B cell (primary cell): ENCODE measurements at regions of chr2 and their contacts with region 1.

Region 1: DNA sequence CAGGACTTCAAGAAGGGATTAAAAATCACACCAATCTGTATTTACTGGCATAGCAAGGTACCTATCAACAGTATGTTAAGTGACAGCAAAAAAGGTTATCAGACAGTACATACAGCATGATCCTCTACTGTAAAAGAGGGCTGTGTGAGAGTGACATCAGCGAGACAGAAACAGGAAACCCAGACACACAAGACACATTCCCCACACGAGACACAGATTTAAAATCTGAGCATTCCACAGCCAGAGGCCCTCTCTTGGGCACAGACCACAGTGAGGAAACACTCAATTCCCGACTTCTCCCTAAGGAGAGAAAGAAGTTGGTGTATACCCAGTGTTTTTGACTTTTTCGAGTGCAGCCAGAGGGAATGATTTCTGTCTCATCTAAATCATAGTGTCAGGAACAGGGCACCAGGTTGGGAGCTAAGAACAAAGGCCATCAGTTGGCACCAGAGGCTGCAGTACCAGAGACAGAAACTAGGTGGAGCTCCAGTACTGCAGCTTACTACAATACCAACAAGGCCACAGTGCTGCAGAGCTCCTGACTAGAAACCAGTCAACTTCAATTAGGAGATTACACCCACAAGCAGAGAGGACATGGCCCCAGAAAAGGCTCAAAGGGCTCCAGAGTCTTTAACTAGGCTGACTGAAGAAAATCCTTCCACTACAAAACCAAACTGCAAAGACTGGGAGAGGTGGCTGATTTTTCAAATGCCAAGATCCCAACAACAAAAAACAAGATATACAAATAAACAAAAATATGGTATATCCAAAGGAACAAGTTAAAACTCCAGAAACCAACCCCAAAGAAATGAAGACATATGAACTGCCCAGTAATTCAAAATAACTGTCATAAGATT is 41.0 kb downstream of the UNC50 start:
- DNase-seq: peak; percentile 85
- ATAC-seq: peak; percentile 99
- H3K4me3 ChIP-seq: no peak overlapping the region
- H3K4me3 Mint-ChIP-seq: no peak overlapping the region
- H3K27ac ChIP-seq: no peak overlapping the region
- H3K27ac Mint-ChIP-seq: no peak overlapping the region
- H3K4me1 ChIP-seq: no peaks in the 10 kb centered on the region
- H3K4me1 Mint-ChIP-seq: peaks cover 24% of the 10 kb centered on the region
- H3K27me3 ChIP-seq: no peaks in the 10 kb centered on the region
- H3K27me3 Mint-ChIP-seq: no peaks in the 10 kb centered on the region
- CTCF ChIP-seq: peak; percentile 98

Region 2: DNA sequence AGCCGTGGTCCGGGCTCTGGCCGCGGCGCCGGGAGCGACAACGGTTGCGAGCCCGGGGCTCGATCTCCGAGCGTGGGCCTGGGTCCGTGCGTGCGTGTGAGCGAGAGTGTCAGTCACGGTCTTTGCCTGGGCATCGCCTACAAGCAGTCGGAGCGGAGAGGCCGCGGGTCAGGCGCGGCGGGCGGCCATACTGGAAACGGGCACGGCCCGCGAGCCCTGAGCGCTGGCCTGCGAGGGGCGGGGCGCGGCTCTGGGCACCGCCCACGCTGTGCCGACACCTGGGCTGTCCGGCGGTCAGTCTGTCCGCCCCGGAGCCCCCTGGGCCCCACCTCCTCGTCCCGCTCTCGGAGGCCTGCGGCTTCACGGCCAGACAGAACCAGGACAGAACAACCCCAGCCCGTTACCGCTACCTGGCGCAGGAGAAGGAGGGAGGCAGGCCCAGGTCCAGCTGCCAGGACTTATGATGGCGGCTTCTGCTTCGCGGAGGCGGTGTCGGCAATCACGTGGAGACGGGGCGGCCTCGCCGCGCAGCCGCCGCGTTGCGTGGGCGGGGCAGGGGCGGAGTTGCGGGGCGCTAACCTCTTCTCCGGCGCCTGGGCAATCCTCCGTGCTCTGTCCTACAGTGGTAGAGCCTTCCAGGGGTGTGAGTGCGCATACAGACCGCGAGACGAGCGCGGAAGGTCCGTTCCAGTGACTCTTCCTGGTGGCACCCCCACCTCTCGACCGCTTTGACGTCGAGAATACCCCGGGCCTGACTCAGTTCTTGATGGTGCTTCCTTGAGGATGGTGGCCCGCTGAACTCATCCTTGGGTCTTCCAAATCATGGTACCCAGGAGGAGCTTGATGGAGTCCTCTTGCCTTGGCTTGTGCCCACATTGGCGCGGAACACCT is 653.4 kb before region 1 on chr2 and contains the start of gene TMEM131:
- CTCF ChIA-PET with region 1: no interaction called
- POLR2A ChIA-PET with region 1: no interaction called
- intact Hi-C with region 1: no loop called
- DNase-seq: peak; percentile 98
- ATAC-seq: peak; percentile 81
- H3K4me3 ChIP-seq: peak within 1 kb of the TSS; percentile 63 to 89 (median 82)
- H3K4me3 Mint-ChIP-seq: peak within 1 kb of the TSS; percentile 93
- H3K27ac ChIP-seq: peak within 1 kb of the TSS; percentile 82 to 93
- H3K27ac Mint-ChIP-seq: peak within 1 kb of the TSS; percentile 96
- H3K4me1 ChIP-seq: peaks cover 31 to 32% of the 10 kb centered on the region in 2 donors
- H3K4me1 Mint-ChIP-seq: peaks cover 41% of the 10 kb centered on the region
- H3K27me3 ChIP-seq: no peaks in the 10 kb centered on the region
- H3K27me3 Mint-ChIP-seq: no peaks in the 10 kb centered on the region
- CTCF ChIP-seq: no peak
- total RNA-seq, gene TMEM131: 101 and 102 TPM in 2 replicates

Region 3: DNA sequence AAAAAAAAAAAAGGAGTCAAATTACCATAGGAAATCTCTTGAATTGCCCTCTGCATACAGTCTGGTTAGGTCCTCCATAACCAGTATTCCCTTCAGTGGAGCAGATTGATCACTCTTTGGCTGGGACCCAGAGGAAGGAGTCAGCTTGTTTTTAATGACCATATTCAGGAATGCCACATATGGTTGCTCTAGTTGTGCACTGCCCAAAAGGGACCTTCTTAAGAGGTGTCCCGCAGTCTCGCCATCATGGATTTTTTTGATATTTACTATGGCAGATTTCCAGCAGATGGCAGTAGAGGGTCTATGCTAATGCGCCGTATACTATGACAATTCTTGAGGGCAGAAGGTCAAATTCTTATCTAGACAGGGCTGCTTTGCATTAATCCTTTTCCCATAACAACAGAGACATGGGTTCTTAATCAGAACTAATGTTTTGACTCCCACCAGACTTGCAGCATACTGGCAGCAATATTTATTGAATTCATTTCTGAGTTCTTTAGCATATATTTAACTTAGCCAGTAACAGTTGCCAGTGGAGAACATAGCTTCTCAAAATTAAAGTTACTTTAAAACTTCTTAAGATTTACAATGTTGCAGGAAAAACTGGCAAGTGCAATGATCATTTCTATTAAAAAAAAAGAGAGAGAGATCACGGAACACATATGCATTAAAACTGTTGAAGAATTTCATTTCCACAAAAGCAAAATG is 236.5 kb before region 1 on chr2:
- CTCF ChIA-PET with region 1: interaction called, 6 read pairs
- POLR2A ChIA-PET with region 1: no interaction called
- intact Hi-C with region 1: loop called (anchors 2 kb)
- DNase-seq: peak; percentile 83
- ATAC-seq: peak; percentile 81
- H3K4me3 ChIP-seq: no peak overlapping the region
- H3K4me3 Mint-ChIP-seq: no peak overlapping the region
- H3K27ac ChIP-seq: no peak overlapping the region
- H3K27ac Mint-ChIP-seq: no peak overlapping the region
- H3K4me1 ChIP-seq: peaks cover 0 to 2% of the 10 kb centered on the region in 2 donors
- H3K4me1 Mint-ChIP-seq: peaks cover 2% of the 10 kb centered on the region
- H3K27me3 ChIP-seq: no peaks in the 10 kb centered on the region
- H3K27me3 Mint-ChIP-seq: peaks cover 4% of the 10 kb centered on the region
- CTCF ChIP-seq: peak; percentile 93

Region 4: DNA sequence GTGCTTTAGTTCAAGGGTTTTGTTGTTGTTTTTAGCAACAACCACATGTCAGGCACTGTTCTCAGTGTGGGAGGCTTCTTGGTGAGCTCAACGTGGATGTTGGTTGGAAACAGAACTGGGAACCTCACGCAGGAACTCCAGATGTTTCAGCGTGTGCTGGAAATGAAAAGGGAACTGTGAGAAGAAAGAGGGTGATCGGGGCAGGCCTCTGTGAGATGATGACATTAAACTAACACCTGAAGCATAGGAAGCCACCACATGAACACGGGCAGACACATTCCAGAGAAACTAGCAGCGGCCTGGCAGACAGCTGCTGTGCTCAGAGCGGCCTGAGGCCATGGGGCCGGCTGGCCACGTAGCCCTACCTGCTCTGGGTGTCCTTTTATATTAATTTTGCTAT is 107.5 kb before region 1 on chr2:
- CTCF ChIA-PET with region 1: no interaction called
- POLR2A ChIA-PET with region 1: no interaction called
- intact Hi-C with region 1: no loop called
- DNase-seq: no peak
- ATAC-seq: no peak
- H3K4me3 ChIP-seq: no peak overlapping the region
- H3K4me3 Mint-ChIP-seq: no peak overlapping the region
- H3K27ac ChIP-seq: no peak overlapping the region
- H3K27ac Mint-ChIP-seq: no peak overlapping the region
- H3K4me1 ChIP-seq: peaks cover 0 to under 1% of the 10 kb centered on the region in 2 donors
- H3K4me1 Mint-ChIP-seq: peaks cover 2% of the 10 kb centered on the region
- H3K27me3 ChIP-seq: no peaks in the 10 kb centered on the region
- H3K27me3 Mint-ChIP-seq: no peaks in the 10 kb centered on the region
- CTCF ChIP-seq: no peak

Region 5: DNA sequence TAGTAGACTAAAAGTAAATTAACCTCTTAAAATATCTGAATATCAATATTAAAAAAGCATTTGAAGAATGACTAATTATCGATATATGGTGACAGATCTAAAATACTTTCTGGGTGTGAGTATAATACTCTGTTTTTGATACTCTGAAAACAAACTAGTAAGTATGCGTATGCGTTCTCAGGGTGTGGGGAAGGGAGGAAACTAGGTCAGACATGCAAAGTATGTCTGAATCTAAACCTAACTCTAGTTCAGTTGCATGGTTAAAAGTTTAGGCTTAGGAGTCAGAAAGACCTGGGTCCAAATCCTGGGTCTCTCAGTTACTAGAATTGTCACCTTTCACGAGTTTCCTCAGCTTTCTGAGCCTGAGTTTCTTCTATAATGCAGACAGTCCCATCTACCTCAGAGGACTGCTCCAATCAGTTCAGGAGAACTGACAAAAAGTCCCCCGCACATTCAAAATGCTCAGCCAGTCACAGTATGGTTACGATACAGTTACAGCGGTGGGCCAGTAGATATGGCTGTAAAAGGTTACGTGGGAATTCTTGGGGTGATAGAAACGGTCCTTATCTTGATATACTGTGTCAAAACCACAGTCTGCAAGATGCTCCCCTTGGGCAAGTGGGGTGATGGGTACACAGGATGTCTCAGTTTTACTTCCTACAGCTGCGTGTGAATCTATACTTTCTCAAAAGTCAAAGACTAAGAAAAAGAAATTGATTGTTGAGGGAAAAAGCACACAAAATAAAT is 11.8 kb before region 1 on chr2:
- CTCF ChIA-PET with region 1: interaction called, 26 read pairs
- POLR2A ChIA-PET with region 1: no interaction called
- intact Hi-C with region 1: no loop called
- DNase-seq: peak; percentile 31
- ATAC-seq: peak; percentile 47
- H3K4me3 ChIP-seq: no peak overlapping the region
- H3K4me3 Mint-ChIP-seq: peak overlapping the region; percentile 85
- H3K27ac ChIP-seq: peak overlapping the region in 1 of 2 donors; percentile 83
- H3K27ac Mint-ChIP-seq: peak overlapping the region; percentile 94
- H3K4me1 ChIP-seq: peaks cover 5 to 7% of the 10 kb centered on the region in 2 donors
- H3K4me1 Mint-ChIP-seq: peaks cover 10% of the 10 kb centered on the region
- H3K27me3 ChIP-seq: no peaks in the 10 kb centered on the region
- H3K27me3 Mint-ChIP-seq: no peaks in the 10 kb centered on the region
- CTCF ChIP-seq: no peak

Region 6: GRCh38 chr2:98771721-98772524 is 122.6 kb after region 1 on chr2:
- CTCF ChIA-PET with region 1: interaction called, 12 read pairs
- POLR2A ChIA-PET with region 1: no interaction called
- intact Hi-C with region 1: no loop called
- DNase-seq: peak; percentile 54
- ATAC-seq: peak; percentile 70
- H3K4me3 ChIP-seq: peak overlapping the region; percentile 16 to 62 (median 24)
- H3K4me3 Mint-ChIP-seq: peak overlapping the region; percentile 82
- H3K27ac ChIP-seq: peak overlapping the region; percentile 14 to 17
- H3K27ac Mint-ChIP-seq: peak overlapping the region; percentile 74
- H3K4me1 ChIP-seq: peaks cover 19 to 29% of the 10 kb centered on the region in 2 donors
- H3K4me1 Mint-ChIP-seq: peaks cover 32% of the 10 kb centered on the region
- H3K27me3 ChIP-seq: peaks cover 0 to 22% (median 0%) of the 10 kb centered on the region in 4 experiments
- H3K27me3 Mint-ChIP-seq: peaks cover 7% of the 10 kb centered on the region
- CTCF ChIP-seq: no peak

Region 7: GRCh38 chr2:98828793-98829371 is 179.5 kb after region 1 on chr2:
- CTCF ChIA-PET with region 1: interaction called, 20 read pairs
- POLR2A ChIA-PET with region 1: no interaction called
- intact Hi-C with region 1: no loop called
- DNase-seq: no peak
- ATAC-seq: no peak
- H3K4me3 ChIP-seq: no peak overlapping the region
- H3K4me3 Mint-ChIP-seq: no peak overlapping the region
- H3K27ac ChIP-seq: no peak overlapping the region
- H3K27ac Mint-ChIP-seq: no peak overlapping the region
- H3K4me1 ChIP-seq: peaks cover 4 to 9% of the 10 kb centered on the region in 2 donors
- H3K4me1 Mint-ChIP-seq: peaks cover 11% of the 10 kb centered on the region
- H3K27me3 ChIP-seq: peaks cover 0 to 6% (median 3%) of the 10 kb centered on the region in 4 experiments
- H3K27me3 Mint-ChIP-seq: no peaks in the 10 kb centered on the region
- CTCF ChIP-seq: no peak

Region 8: GRCh38 chr2:98842136-98842535 is 192.8 kb after region 1 on chr2:
- CTCF ChIA-PET with region 1: interaction called, 124 read pairs
- POLR2A ChIA-PET with region 1: no interaction called
- intact Hi-C with region 1: loop called (anchors 1 kb)
- DNase-seq: no peak
- ATAC-seq: no peak
- H3K4me3 ChIP-seq: no peak overlapping the region
- H3K4me3 Mint-ChIP-seq: no peak overlapping the region
- H3K27ac ChIP-seq: no peak overlapping the region
- H3K27ac Mint-ChIP-seq: no peak overlapping the region
- H3K4me1 ChIP-seq: peaks cover 0 to 2% of the 10 kb centered on the region in 2 donors
- H3K4me1 Mint-ChIP-seq: peaks cover 1% of the 10 kb centered on the region
- H3K27me3 ChIP-seq: peaks cover 0 to 6% (median 4%) of the 10 kb centered on the region in 4 experiments
- H3K27me3 Mint-ChIP-seq: peaks cover 10% of the 10 kb centered on the region
- CTCF ChIP-seq: no peak

Region 9: GRCh38 chr2:99180755-99181623 is 531.6 kb after region 1 on chr2 and contains the starts of genes MITD1 and MRPL30:
- CTCF ChIA-PET with region 1: interaction called, 9 read pairs
- POLR2A ChIA-PET with region 1: no interaction called
- intact Hi-C with region 1: loop called (anchors 1 kb)
- DNase-seq: peak; percentile 96
- ATAC-seq: peak; percentile 96
- H3K4me3 ChIP-seq: peak within 1 kb of the TSS; percentile 93 to 100 (median 97)
- H3K4me3 Mint-ChIP-seq: peak within 1 kb of the TSS; percentile 99
- H3K27ac ChIP-seq: peak within 1 kb of the TSS; percentile 92 to 95
- H3K27ac Mint-ChIP-seq: peak within 1 kb of the TSS; percentile 99
- H3K4me1 ChIP-seq: peaks cover 25 to 26% of the 10 kb centered on the region in 2 donors
- H3K4me1 Mint-ChIP-seq: peaks cover 49% of the 10 kb centered on the region
- H3K27me3 ChIP-seq: no peaks in the 10 kb centered on the region
- H3K27me3 Mint-ChIP-seq: no peaks in the 10 kb centered on the region
- CTCF ChIP-seq: no peak
- total RNA-seq, gene MITD1: 71.6 and 73.0 TPM in 2 replicates
- total RNA-seq, gene MRPL30: 18.5 and 21.9 TPM in 2 replicates